ENCODE measurements at regions of chr11 and their contacts with region 1.

Region 1: GRCh38 chr11:34926101-34926830 is 9.8 kb downstream of the PDHX start:
- DNase-seq: peak; percentile 36
- H3K4me3 ChIP-seq: no peak overlapping the region
- H3K27ac ChIP-seq: no peak overlapping the region
- H3K4me1 ChIP-seq: peaks cover 4% of the 10 kb centered on the region
- H3K27me3 ChIP-seq: no peaks in the 10 kb centered on the region
- CTCF ChIP-seq: peak; percentile 63 to 66

Region 2: GRCh38 chr11:34977089-34977906 is 51.0 kb after region 1 on chr11:
- CTCF ChIA-PET with region 1: no interaction called
- dilution Hi-C with region 1: loop called (anchors 5 kb)
- in situ Hi-C with region 1: no loop called
- intact Hi-C with region 1: loop called (anchors 2 kb)
- DNase-seq: peak; percentile 75
- H3K4me3 ChIP-seq: peak overlapping the region in 2 of 3 experiments; percentile 28 to 36
- H3K27ac ChIP-seq: peak overlapping the region; percentile 78
- H3K4me1 ChIP-seq: peaks cover 35% of the 10 kb centered on the region
- H3K27me3 ChIP-seq: no peaks in the 10 kb centered on the region
- CTCF ChIP-seq: no peak

Region 3: DNA sequence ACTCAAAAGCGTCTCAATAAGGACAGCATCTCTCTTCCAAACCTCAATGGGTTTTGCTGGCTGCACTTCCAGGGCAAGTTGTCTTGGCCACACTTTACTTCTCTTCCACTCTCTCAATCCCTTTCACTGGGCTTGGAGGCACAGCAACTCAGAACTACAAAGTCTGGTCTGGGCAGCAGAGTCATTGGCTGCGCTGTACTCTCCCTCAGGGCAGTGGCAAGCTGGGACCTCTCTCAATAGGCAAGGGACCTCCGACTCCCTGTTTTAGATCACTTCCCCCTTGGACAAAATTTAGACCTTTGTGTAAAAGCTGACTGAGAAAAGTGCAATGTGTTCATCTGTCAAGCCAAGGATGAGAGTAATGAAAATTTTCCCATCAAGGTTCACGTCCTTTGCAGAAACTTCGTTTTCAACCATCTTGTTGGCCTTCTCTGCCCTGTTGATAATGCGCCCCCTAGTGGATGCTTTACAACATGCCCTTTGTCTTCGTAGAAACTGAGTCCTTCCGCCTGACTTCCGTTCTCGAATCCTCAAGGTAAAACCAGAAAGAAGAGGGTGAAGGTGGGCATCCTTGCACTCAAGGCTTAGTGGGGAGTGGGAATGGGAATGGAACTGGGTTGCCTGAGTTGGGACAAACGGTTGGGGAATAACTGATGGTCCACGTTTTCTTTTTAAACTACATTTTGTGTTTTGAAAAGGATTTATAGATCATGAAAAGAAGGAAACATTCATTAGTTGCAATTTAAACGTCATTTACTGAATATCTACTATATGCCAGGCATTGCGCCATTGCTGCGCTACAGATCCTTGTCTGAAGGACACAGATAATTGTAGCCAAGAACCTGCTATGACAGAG is 311.8 kb after region 1 on chr11:
- CTCF ChIA-PET with region 1: interaction called, 4 read pairs
- dilution Hi-C with region 1: no loop called
- in situ Hi-C with region 1: no loop called
- intact Hi-C with region 1: loop called (anchors 1 kb)
- DNase-seq: no peak
- H3K4me3 ChIP-seq: no peak overlapping the region
- H3K27ac ChIP-seq: no peak overlapping the region
- H3K4me1 ChIP-seq: peaks cover 19% of the 10 kb centered on the region
- H3K27me3 ChIP-seq: no peaks in the 10 kb centered on the region
- CTCF ChIP-seq: peak; percentile 79 to 91

Region 4: DNA sequence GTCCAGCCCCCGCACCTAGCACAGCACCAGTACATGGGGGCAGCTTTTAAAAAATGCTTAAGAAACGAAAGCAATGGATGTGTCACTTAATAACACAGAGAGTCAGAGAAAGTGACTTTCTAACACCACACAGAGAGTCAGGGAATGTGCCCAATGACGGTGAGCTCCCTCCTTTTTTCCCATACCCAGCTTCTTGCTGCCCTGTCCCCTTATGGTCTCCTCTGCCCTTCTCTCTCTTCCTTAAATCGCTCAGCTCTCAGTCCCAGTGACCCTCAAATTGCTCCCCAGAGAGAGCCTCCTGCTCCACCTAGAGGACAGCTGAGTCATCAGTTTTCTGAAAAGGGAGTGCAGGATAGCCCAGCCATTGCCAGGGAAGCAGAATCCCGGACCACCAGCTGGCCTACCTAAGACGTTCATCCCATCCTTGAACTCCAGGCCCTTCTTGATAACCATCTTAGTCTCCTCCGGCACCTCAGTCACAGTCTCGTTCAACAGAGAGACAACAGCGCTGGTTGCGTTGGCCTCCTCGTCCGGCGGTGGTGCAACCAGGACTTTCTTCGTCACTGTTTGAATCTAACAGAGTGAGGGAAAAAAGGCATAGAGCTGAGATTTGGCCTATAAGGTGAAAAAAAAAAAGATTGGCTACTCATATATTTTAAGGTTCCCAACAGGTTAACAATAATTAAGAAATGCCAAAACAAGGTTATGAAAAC is 379.6 kb after region 1 on chr11:
- CTCF ChIA-PET with region 1: interaction called, 6 read pairs
- dilution Hi-C with region 1: no loop called
- in situ Hi-C with region 1: no loop called
- intact Hi-C with region 1: loop called (anchors 2 kb)
- DNase-seq: no peak
- H3K4me3 ChIP-seq: no peak overlapping the region
- H3K27ac ChIP-seq: no peak overlapping the region
- H3K4me1 ChIP-seq: no peaks in the 10 kb centered on the region
- H3K27me3 ChIP-seq: no peaks in the 10 kb centered on the region
- CTCF ChIP-seq: peak; percentile 25 to 67